ENCODE measurements at regions of chr1 and their contacts with region 1.

Region 1: DNA sequence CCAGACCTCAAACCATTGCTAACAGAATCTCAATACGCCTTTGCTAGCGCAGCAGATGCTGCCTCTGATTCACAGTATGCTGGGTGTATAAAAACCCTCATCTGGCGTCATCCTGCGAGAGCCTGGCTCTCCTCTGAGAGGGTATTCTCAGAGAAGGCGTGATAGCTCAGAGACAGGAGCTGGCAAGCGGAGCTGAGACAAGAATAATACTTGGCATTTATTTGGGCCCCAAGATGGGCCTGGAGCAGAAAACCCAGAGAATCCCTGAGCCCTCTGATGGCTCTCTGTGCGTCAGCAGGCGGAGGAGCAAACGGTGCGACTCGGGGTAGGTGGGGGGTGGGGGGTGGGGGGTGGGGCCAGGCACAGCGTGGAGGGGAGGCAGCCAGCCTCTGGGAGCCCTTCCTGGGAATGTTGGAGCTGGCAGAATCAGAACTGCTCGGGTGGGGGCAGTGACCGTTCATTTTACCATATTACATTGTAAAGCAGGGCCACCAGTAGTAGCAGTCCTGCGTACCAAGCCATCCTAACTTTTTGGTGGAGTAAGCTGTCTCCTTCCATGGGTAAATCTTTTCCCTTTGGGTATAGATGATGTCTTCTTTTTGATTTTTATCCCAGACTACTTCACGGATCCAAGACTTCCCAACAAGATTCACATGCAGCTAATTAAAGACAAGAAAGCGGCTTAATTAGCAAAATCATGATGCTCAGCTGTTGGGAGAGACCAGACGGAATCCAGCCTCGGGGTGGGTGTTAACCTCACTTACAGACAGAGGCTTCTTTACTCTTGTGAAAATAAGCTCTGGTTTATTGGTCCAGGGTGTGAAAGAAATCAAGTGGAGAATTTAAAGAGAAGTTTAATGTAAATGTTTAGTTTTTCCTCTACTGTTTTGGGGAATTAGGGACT is 7.1 kb downstream of the RIIAD1 start:
- DNase-seq: peak; percentile 50
- H3K4me3 ChIP-seq: no peak overlapping the region
- CTCF ChIP-seq: no peak

Region 2: DNA sequence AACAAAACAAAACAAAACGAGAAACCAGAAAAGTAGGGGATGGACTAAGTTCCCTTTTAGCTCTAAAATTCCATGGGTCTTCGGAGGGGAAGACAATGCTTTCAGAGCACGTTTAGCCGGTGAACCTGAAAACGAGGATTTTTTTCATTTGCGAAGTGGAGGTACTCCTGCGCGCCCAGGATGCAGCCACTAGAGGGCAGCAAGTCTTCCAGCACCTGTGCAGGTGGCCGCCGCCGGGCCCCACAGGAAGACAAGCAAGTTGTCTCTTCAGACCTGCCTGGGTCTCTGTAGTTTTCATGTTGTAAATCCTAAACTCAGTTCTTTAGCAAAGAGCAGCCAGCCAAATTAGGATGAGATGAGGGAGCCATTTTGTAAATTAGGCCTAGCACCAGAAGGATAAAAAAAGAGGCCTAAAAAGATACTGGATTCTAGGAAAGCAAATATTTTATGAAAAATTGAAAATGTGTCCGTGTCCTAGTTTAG is 134.2 kb before region 1 on chr1:
- in situ Hi-C with region 1: loop called (anchors 5 kb)
- DNase-seq: no peak
- H3K4me3 ChIP-seq: no peak overlapping the region
- CTCF ChIP-seq: peak; percentile 95

Region 3: DNA sequence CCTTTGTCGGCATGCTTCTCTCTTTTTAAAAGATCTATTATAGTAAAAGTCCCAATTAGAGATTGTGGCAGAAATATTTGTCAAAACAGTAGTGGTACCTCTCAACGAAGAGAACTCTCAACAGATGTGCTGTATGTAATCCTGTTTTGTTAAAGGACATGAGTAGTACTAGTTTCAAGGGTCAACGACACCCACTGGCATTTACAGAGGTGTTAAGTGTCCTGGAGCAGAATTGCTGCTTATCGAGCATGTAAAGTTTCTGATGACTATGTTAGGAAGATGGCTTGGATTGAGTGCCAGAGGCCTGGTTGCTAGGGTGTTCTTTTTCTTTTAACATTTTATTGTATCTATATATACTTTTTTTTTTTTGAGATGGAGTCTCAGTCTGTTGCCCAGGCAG is 38.9 kb before region 1 on chr1:
- in situ Hi-C with region 1: loop called (anchors 5 kb)
- DNase-seq: no peak
- H3K4me3 ChIP-seq: no peak overlapping the region
- CTCF ChIP-seq: no peak

Measured in astrocyte of the cerebellum (primary cell).